Ovary (tissue), 10 donors: ENCODE measurements at regions of chr3 and their contacts with region 1.

Region 1: DNA sequence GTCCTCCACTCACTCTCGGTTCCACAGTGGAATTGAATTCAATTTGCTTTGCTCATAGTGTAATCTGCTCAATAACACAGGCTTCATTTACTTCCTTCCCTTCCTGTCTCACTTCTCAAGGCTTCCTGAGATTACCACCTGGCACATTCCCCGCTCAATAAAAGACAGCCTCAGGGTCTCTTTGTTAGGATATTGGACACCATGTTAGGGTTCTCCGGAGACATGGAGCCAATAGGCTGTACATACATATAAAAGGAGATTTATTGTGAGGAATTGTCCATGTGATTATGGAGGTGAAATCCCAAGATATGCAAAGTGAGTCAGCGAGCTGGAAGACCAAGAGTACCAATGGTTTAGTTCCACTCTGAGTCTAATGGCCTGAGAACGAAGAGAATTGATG is 974.5 kb downstream of the CADM2 start:
- DNase-seq: no peak
- H3K4me3 ChIP-seq: no peak overlapping the region
- H3K27ac ChIP-seq: no peak overlapping the region
- H3K4me1 ChIP-seq: no peaks in the 10 kb centered on the region
- H3K27me3 ChIP-seq: no peaks in the 10 kb centered on the region
- CTCF ChIP-seq: no peak
- EP300 ChIP-seq: no peak
- POLR2A ChIP-seq: no peak

Region 2: DNA sequence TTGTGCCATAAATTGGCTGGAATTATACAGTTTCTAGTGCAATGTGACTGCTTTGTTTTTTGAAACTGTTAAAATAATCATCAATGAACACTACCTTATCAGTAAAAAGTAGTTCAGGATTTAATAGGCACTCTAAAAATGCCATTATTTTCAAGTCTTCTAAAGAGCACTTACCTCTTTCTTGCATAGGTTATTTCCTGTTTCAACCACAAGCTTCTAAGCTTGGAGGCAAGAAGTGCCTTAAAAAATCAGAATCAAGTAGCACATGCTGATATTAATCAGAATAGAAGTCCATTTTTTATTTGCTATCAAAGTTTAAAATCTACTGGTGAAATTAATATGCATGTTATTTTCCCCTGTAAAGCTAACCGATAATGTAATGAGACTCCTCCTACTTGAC is 17.1 kb after region 1 on chr3:
- intact Hi-C with region 1: loop called in 1 of 4 experiments (anchors 1 kb)
- DNase-seq: no peak
- H3K4me3 ChIP-seq: no peak overlapping the region
- H3K27ac ChIP-seq: no peak overlapping the region
- H3K4me1 ChIP-seq: no peaks in the 10 kb centered on the region
- H3K27me3 ChIP-seq: no peaks in the 10 kb centered on the region
- CTCF ChIP-seq: no peak
- EP300 ChIP-seq: no peak
- POLR2A ChIP-seq: no peak